Activated CD4-positive, alpha-beta memory T cell treated with anti-CD3 and anti-CD28 coated beads, Interleukin-2, amount 10 ng/mL, durations not matched to agents 7 days and 5 days (primary cell): ENCODE measurements at regions of chr2 and their contacts with region 1.

Region 1: GRCh38 chr2:38572167-38572566 is 30.6 kb downstream of the HNRNPLL start:
- DNase-seq: no peak
- H3K4me3 Mint-ChIP-seq: no peak overlapping the region
- H3K27ac Mint-ChIP-seq: no peak overlapping the region
- H3K4me1 Mint-ChIP-seq: peaks cover 48% of the 10 kb centered on the region
- H3K27me3 Mint-ChIP-seq: no peaks in the 10 kb centered on the region

Region 2: DNA sequence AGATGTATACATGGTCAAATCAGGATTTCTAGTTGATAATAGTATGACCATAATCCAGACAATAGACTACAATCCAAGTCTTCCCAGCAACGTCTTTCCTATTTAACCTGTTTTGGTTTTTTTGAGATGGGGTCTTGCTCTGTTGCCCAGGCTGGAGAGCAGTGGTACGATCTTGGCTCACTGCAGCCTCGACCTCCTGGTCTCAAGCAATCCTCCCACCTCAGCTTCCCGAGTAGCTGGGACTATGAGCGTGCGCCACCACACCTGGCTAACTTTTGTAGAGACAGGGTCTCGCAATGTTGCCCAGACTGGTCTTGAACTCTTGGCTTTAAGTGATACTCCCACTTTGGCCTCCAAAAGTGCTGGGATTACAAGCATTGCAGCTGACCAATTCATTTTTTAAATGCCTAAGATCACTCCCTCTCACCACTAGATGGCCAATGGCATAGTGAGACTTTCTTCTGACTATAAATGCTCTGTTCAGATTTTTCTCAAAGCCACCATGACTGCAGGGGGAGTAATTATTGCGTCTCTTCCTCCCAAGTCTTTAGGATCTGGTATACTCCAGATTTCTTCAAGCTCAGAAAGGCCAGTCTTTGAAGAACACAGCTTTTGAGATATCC is 17.1 kb before region 1 on chr2:
- CTCF ChIA-PET with region 1: interaction called, 13 read pairs
- POLR2A ChIA-PET with region 1: no interaction called
- DNase-seq: no peak
- H3K4me3 Mint-ChIP-seq: no peak overlapping the region
- H3K27ac Mint-ChIP-seq: no peak overlapping the region
- H3K4me1 Mint-ChIP-seq: peaks cover 3% of the 10 kb centered on the region
- H3K27me3 Mint-ChIP-seq: no peaks in the 10 kb centered on the region

Region 3: DNA sequence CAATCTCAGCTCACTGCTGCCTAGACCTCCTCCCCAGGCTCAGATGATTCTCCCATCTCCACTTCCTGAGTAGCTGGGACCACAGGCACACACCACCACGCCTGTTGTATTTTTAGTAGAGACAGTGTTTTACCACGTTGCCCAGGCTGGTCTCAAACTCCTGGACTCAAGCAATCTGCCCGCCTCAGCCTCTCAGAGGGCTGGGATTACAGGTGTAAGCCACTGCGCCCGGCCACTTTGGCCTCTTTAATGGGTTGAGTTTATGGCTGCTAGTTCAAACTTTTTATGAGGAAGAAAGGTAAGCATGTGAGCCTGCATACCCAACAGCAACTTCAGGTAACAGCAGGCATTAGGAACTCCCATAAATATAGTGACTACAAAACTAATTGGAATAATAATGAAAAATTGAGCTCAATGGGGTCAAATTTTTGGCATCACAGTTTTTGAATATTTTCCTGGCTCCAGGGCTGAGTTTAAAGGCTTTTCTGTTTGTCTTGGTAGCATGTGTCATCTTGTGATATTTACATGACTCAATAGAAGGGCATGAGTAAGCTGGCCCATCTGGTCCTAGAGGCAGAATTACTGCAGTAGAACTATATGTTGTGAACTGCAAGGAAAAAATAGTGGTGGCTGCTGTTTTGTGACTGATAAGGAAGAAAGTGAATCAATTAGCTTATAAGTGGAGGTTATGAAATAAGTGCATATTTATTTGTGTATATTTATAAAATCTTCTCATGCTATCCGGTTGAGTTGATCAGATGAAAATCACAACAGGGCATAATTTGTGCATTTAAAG is 118.5 kb after region 1 on chr2:
- CTCF ChIA-PET with region 1: no interaction called
- POLR2A ChIA-PET with region 1: no interaction called
- DNase-seq: no peak
- H3K4me3 Mint-ChIP-seq: no peak overlapping the region
- H3K27ac Mint-ChIP-seq: peak overlapping the region; percentile 44
- H3K4me1 Mint-ChIP-seq: peaks cover 77% of the 10 kb centered on the region
- H3K27me3 Mint-ChIP-seq: no peaks in the 10 kb centered on the region